CD4-positive, alpha-beta T cell (primary cell): ENCODE measurements at regions of chr16 and their contacts with region 1.

Region 1: DNA sequence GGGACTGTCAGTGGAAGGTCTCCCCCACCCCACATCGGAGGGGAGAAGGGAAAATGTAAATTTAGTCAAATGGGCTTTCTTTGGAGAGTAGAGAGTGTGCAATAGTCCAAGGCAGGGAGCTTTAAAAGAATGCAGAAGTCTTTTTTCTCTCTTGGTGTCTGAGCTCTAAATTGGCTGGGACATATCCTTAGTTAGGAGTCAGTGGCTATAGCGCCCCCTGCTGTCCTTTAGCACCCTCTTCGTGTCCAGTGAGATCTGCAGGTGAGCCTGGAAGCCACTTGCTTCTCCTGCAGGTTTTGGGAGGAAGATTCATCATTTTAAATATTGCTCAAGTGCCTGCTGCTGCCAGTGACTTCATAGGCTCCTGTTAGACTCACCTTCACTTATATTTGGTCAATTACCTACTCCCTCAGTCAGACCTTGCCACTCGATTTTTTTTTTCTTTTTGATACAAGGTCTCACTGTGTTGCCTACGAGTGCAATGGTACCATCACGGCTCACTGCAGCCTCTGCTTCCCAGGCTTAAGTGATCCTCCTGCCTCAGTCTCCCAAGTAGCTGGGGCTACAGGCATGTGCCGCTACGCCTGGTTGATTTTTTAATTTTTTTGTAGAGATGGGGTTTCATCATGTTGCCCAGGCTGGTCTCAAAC is 174.8 kb downstream of the PRKCB start:
- DNase-seq: peak; percentile 66 to 91 (median 78)
- ATAC-seq: peak; percentile 30
- H3K4me3 ChIP-seq: no peak overlapping the region
- H3K4me3 Mint-ChIP-seq: no peak overlapping the region
- H3K27ac ChIP-seq: no peak overlapping the region
- H3K27ac Mint-ChIP-seq: peak overlapping the region; percentile 67
- H3K4me1 ChIP-seq: peaks cover 43% of the 10 kb centered on the region
- H3K4me1 Mint-ChIP-seq: peaks cover 57% of the 10 kb centered on the region
- H3K27me3 ChIP-seq: no peaks in the 10 kb centered on the region
- H3K27me3 Mint-ChIP-seq: no peaks in the 10 kb centered on the region
- CTCF ChIP-seq: peak; percentile 84

Region 2: GRCh38 chr16:24027466-24027865 is 16.9 kb after region 1 on chr16:
- CTCF ChIA-PET with region 1: interaction called, 4 read pairs
- POLR2A ChIA-PET with region 1: interaction called, 10 read pairs
- intact Hi-C with region 1: no loop called
- DNase-seq: no peak
- ATAC-seq: no peak
- H3K4me3 ChIP-seq: no peak overlapping the region
- H3K4me3 Mint-ChIP-seq: no peak overlapping the region
- H3K27ac ChIP-seq: no peak overlapping the region
- H3K27ac Mint-ChIP-seq: no peak overlapping the region
- H3K4me1 ChIP-seq: peaks cover 7% of the 10 kb centered on the region
- H3K4me1 Mint-ChIP-seq: peaks cover 38% of the 10 kb centered on the region
- H3K27me3 ChIP-seq: no peaks in the 10 kb centered on the region
- H3K27me3 Mint-ChIP-seq: no peaks in the 10 kb centered on the region
- CTCF ChIP-seq: no peak

Region 3: GRCh38 chr16:24146523-24146922 is 136.0 kb after region 1 on chr16:
- CTCF ChIA-PET with region 1: no interaction called
- POLR2A ChIA-PET with region 1: no interaction called
- intact Hi-C with region 1: no loop called
- DNase-seq: no peak
- ATAC-seq: no peak
- H3K4me3 ChIP-seq: no peak overlapping the region
- H3K4me3 Mint-ChIP-seq: no peak overlapping the region
- H3K27ac ChIP-seq: no peak overlapping the region
- H3K27ac Mint-ChIP-seq: no peak overlapping the region
- H3K4me1 ChIP-seq: peaks cover 4% of the 10 kb centered on the region
- H3K4me1 Mint-ChIP-seq: peaks cover 41% of the 10 kb centered on the region
- H3K27me3 ChIP-seq: no peaks in the 10 kb centered on the region
- H3K27me3 Mint-ChIP-seq: no peaks in the 10 kb centered on the region
- CTCF ChIP-seq: no peak